SK-MEL-5 (cell line): ENCODE measurements at regions of chr1 and their contacts with region 1.

Region 1: DNA sequence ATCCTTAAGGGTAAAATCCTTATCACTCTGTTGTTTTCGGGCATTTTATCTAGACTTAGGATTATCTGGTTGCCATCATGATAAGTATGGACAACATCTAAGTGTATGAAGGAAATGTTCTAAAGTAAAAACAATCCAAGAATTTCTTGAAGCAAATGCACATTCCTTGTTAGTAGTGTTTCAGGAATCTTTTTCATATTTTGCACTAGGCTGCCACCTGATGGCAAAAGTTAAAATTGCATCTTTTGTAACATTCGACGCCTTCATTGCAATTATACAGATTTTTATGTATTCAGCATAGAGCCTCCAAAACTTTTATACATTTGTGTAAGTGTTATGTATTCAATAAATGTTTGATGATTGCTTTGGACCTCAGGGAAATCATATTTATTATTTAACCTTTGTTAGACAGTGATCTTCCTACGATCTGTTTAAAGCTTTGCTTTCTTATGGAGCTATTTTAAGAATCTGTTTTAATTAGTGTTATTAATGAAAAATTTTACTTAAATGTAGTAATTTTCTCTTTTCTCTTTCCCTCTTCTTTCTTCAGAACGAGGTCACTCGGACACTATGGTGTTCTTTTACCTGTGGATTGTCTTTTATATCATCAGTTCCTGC is 49.4 kb upstream of the KIAA1614 start:
- DNase-seq: peak; percentile 70

Region 2: DNA sequence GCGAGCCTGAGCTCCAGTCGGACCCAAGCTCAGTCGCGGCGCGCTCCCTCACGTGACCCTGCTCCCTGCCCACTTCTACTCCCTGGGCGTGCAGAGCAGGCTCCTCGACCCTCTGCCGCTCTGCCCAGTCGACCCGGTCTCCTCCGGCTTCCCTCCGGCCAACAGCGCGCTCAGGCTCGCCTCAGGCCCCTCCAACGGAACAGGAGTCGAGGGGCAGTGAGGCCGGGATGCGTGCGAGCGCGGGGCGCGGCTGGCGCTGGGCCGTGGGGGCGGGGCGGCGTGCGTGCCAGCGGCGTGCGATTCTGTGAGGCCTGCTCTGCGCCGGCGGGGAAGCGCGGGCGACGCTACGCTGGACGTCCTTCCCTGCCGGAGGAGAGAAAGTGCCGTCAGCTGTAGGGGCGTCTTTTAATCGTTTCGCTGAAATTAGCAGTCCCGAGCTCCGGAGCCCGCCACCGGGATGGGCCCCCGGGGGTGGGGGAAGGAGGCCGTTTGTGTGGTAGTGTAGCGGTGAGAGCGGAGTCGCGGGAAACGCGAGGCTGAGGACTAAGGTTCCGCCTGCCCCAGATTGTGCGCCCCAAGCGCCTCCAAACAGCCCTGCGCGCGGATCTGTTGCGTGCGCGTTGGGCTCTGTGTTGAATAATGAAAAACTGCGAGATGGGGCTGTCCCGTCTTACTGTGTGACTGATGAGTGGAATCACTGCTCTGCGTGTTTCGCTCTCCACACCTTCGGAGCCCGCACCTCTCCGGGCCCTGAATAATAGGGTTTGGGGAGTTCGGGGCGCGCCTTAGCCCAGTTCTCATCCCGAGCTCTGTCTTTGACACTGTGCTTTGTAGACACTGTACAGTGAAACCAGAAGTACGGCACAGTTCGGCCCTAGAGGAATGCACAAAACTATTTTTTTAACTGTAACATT is 360.6 kb before region 1 on chr1 and contains the start of gene ACBD6:
- in situ Hi-C with region 1: loop called (anchors 25 kb)
- DNase-seq: peak; percentile 82
- total RNA-seq, gene ACBD6: 45.3 and 46.0 TPM in 2 replicates

Region 3: GRCh38 chr1:180751921-180752320 is 111.3 kb before region 1 on chr1:
- in situ Hi-C with region 1: no loop called
- DNase-seq: no peak